ENCODE measurements at regions of chr16 and their contacts with region 1.

Region 1: GRCh38 chr16:89476804-89477261 is 13.5 kb downstream of the ANKRD11 start:
- DNase-seq: no peak
- H3K4me3 Mint-ChIP-seq: peak overlapping the region; percentile 46
- H3K27ac Mint-ChIP-seq: peak overlapping the region; percentile 29
- H3K4me1 Mint-ChIP-seq: peaks cover 74% of the 10 kb centered on the region
- H3K27me3 Mint-ChIP-seq: no peaks in the 10 kb centered on the region
- CTCF ChIP-seq: no peak

Region 2: GRCh38 chr16:89343501-89344457 is 133.1 kb before region 1 on chr16:
- CTCF ChIA-PET with region 1: no interaction called
- POLR2A ChIA-PET with region 1: no interaction called
- intact Hi-C with region 1: no loop called
- DNase-seq: no peak
- H3K4me3 Mint-ChIP-seq: no peak overlapping the region
- H3K27ac Mint-ChIP-seq: no peak overlapping the region
- H3K4me1 Mint-ChIP-seq: peaks cover 12% of the 10 kb centered on the region
- H3K27me3 Mint-ChIP-seq: no peaks in the 10 kb centered on the region
- CTCF ChIP-seq: no peak

Region 3: DNA sequence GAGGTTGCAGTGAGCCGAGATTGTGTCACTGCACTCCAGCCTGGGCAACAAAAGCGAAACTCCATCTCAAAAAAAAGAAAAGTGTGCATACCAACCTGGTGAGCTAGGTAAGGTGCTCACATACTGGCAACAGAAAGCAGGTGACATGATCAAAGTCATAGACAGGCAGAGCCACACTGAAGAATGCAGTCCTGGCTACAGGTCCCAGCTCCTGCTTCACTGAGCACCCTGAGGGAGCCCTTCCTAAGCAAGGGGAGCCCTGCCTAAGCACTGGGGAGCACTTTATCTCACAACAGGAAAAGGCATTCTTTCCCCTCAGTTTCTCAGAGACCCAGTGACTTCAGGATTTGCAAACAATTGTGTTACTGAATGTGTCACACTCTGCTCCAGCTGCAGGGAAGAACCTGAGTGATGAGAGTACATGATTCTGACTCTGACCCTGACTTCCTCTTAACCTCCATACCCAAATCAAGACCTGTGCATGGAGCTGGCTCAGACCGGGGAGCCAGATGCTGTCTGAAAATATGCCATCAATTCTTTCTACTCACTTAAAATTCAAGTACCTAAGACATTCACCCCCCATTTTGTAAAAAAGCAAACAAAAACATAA is 27.0 kb before region 1 on chr16:
- CTCF ChIA-PET with region 1: interaction called, 4 read pairs
- POLR2A ChIA-PET with region 1: interaction called, 40 read pairs
- intact Hi-C with region 1: no loop called
- DNase-seq: no peak
- H3K4me3 Mint-ChIP-seq: no peak overlapping the region
- H3K27ac Mint-ChIP-seq: no peak overlapping the region
- H3K4me1 Mint-ChIP-seq: peaks cover 37% of the 10 kb centered on the region
- H3K27me3 Mint-ChIP-seq: no peaks in the 10 kb centered on the region
- CTCF ChIP-seq: no peak

Region 4: GRCh38 chr16:89458551-89458950 is 18.3 kb before region 1 on chr16:
- CTCF ChIA-PET with region 1: interaction called, 9 read pairs
- POLR2A ChIA-PET with region 1: interaction called, 13 read pairs
- intact Hi-C with region 1: no loop called
- DNase-seq: peak; percentile 71
- H3K4me3 Mint-ChIP-seq: peak overlapping the region; percentile 18
- H3K27ac Mint-ChIP-seq: peak overlapping the region; percentile 83
- H3K4me1 Mint-ChIP-seq: peaks cover 23% of the 10 kb centered on the region
- H3K27me3 Mint-ChIP-seq: no peaks in the 10 kb centered on the region
- CTCF ChIP-seq: no peak

Region 5: GRCh38 chr16:89490387-89491237 is 13.8 kb after region 1 on chr16 and contains the start of gene ANKRD11:
- CTCF ChIA-PET with region 1: no interaction called
- POLR2A ChIA-PET with region 1: interaction called, 20 read pairs
- intact Hi-C with region 1: no loop called
- DNase-seq: peak; percentile 99
- H3K4me3 Mint-ChIP-seq: peak within 1 kb of the TSS; percentile 88
- H3K27ac Mint-ChIP-seq: peak within 1 kb of the TSS; percentile 86
- H3K4me1 Mint-ChIP-seq: peaks cover 10% of the 10 kb centered on the region
- H3K27me3 Mint-ChIP-seq: no peaks in the 10 kb centered on the region
- CTCF ChIP-seq: no peak
- total RNA-seq, gene ANKRD11: 218 and 237 TPM in 2 replicates

Region 6: GRCh38 chr16:89502319-89502878 is 25.6 kb after region 1 on chr16:
- CTCF ChIA-PET with region 1: interaction called, 3 read pairs
- POLR2A ChIA-PET with region 1: interaction called, 10 read pairs
- intact Hi-C with region 1: no loop called
- DNase-seq: peak; percentile 51
- H3K4me3 Mint-ChIP-seq: peak overlapping the region; percentile 43
- H3K27ac Mint-ChIP-seq: peak overlapping the region; percentile 95
- H3K4me1 Mint-ChIP-seq: peaks cover 24% of the 10 kb centered on the region
- H3K27me3 Mint-ChIP-seq: no peaks in the 10 kb centered on the region
- CTCF ChIP-seq: no peak

Region 7: DNA sequence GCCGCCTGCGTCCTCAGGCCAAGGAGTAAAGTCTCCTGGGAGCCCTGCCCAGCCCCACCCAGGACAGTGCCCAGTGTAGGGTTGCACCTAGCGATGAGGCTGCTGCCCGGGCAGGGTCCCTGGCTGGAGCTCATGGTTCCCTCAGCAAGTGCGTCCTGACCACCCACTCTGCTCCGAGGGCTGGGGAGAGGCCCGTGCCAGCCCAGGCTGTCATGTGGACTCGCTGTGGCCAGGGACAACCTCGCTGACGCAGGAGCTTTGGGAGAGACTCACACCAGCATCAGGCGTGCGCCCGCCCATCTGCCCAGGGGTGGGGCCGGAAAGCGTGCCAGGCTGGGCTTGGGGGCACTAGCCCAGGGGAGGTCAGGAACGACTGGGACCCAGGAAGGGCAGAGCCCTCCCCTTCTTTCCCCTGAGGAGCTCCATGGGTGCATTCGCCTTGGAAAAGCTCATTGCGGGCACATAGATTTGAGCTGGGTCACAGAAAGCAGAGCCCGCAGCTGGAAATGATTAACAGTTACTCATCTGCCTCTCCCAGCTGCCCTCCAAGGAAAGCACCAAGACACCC is 156.3 kb after region 1 on chr16:
- CTCF ChIA-PET with region 1: no interaction called
- POLR2A ChIA-PET with region 1: no interaction called
- intact Hi-C with region 1: no loop called
- DNase-seq: peak; percentile 59
- H3K4me3 Mint-ChIP-seq: no peak overlapping the region
- H3K27ac Mint-ChIP-seq: no peak overlapping the region
- H3K4me1 Mint-ChIP-seq: peaks cover 6% of the 10 kb centered on the region
- H3K27me3 Mint-ChIP-seq: no peaks in the 10 kb centered on the region
- CTCF ChIP-seq: no peak

Measured in MCF 10A (cell line).